ENCODE measurements at regions of chr13 and their contacts with region 1.

Region 1: GRCh38 chr13:51286135-51287002 is 53.1 kb upstream of the SERPINE3 start:
- DNase-seq: peak; percentile 73
- ATAC-seq: peak; percentile 75

Region 2: DNA sequence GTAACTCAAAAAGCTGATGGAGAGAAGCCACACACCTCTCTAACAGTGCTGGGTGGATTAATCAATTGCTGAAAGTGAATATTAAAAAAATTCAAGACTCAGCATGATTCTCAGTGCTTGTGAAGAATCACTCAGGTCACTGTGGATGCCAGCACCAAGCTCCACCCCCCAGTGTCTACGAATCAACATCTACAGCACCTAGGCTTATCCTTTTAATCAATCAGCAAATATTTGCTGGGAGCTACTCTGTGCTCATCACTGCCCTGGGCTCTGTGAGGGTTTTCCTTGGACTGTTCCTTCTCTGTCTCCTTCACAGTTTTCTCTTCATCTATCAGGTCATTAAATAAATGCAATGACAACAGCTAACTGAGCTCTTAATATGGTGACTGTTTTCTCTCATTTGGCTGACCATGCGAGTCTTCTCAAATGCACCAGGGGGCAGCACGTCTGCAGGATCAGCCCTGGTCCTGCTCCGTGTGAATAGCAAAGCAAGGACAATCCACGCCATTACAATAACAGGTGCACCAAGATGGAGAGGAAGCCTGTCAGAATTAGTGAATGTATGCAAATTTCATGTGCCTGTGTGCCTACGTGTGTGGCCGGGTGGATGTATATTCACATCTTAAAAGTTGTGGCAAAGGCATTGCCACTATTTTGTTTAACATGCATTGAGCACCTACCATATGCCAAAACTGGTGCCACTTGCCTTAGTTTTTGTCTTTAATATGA is 160.7 kb before region 1 on chr13:
- intact Hi-C with region 1: loop called (anchors 2 kb)
- DNase-seq: no peak
- ATAC-seq: peak; percentile 59

Region 3: GRCh38 chr13:51148952-51149573 is 137.3 kb before region 1 on chr13:
- intact Hi-C with region 1: loop called (anchors 1 kb)
- DNase-seq: no peak
- ATAC-seq: peak; percentile 67

Region 4: GRCh38 chr13:51222037-51222685 is 64.2 kb before region 1 on chr13 and contains the start of gene FAM124A:
- intact Hi-C with region 1: loop called (anchors 1 kb)
- DNase-seq: peak; percentile 78
- ATAC-seq: peak; percentile 83
- total RNA-seq, gene FAM124A: 12.1 TPM

Region 5: GRCh38 chr13:51249770-51250741 is 36.3 kb before region 1 on chr13:
- intact Hi-C with region 1: loop called (anchors 5 kb)
- DNase-seq: no peak
- ATAC-seq: no peak

Region 6: DNA sequence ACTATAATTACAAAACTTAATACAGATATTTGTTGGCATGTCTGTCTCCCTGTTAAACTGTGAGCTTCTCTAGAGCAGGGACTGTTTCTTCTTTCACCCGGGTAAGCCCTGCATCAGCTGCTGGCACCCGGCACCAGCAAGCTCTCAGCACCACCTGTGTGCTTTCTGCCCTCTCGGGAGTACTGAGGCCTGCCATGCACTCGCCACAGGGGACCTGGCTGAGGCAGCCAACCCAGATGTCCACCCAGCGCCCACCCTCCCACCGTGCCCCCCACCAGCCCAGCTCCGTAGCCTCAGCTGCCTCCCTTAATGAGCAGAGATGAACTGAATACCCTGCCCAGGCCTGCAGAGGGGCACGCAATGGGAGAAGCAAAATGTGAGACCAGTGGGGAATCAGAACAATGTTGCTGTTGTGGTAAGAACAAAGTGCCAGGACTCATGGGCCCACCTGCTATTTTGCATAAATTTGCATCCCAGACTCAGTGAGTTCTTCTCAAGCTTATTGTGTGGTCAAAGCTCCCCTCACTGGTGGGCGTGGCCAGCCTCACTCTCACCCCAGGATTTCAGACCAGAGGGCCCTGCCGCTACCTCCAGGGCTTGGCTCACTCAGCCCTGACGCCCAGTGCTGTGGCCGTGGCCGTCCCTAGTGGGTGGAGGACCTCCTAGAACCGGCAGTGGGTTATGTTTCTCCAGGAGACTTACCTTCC is 38.5 kb after region 1 on chr13:
- intact Hi-C with region 1: no loop called
- DNase-seq: no peak
- ATAC-seq: no peak

Region 7: GRCh38 chr13:51803422-51804294 is 517.3 kb after region 1 on chr13 and contains the start of gene DHRS12:
- intact Hi-C with region 1: loop called (anchors 10 kb)
- DNase-seq: peak; percentile 97
- ATAC-seq: peak; percentile 89
- total RNA-seq, gene DHRS12: 10.2 TPM